HEK293 (cell line): ENCODE measurements at regions of chr14 and their contacts with region 1.

Region 1: DNA sequence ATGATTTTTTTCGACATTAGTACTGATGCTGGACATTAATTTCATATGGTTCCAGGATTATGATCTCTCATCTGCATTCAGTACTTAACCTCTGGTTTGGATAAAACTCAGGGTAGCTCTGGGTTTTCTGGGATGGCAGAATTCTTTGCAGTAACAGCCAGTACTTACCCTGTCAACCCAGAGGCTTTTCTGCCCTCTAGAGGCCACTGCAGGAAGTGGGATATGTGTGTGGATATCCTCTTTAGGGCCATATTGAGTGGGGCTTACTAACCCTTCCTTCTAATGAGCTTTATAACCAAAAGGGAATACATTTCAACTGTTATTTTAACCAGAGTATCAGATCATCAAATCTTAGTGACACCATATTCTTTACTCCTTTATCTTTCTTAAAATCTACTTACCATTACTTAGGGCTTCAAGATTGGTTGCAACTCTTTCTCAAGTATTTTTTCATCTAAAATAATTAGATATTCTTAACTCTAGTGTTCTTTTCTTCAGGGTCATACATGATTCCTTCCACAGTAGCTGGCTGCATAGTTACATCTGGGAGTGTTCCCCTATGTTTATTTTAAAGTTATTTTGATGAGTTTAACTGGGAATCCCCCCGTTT is 488.0 kb upstream of the STXBP6 start:
- H3K4me3 ChIP-seq: no peak overlapping the region
- H3K27ac ChIP-seq: no peak overlapping the region
- H3K4me1 ChIP-seq: no peaks in the 10 kb centered on the region
- CTCF ChIP-seq: no peak

Region 2: DNA sequence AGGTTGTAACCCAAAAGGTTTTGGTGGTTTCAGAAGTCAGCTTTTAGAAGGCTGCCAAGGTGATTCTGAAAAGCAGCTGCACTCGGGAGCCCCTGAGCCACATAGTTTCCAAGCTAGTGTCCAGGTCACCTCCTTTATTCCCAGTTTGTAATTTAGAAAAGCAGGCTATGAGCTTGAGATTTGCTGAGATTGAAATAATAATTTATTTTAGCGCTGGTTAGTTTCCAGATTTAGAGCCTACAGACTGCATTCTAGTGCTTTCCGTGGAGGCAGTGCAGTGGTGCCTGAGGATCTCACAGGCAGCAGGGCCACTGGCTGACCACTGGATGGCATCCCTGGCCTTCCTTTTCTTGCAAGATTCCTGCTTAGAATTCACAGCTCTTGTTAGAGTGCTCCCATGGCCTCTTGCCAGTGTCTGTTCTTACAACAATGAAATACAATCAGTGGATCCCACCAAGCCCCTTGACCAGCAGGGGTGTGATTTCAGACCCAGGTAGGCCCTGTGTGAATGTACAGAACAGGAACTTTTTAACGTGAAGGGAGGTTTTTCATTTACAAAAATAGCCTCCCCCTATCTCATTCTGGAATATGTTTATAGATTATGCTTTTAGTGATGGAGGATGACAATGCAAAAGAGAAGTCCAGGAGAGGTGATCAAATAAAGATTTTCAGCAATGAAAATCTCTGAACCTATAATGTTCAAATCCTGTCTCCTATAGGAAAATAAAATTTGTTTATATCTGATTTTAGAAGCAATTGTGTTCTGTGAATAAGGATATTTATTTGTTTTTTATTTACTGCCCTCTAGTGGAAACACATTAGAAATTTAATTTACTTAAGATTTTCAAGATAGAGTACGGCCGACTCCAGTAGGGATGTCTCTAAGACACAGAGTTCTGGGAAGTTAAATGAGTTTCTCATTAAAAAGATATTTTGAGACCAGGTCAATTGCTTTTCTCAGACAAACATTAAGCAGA is 125.9 kb before region 1 on chr14:
- CTCF ChIA-PET with region 1: interaction called, 11 read pairs
- POLR2A ChIA-PET with region 1: no interaction called
- H3K4me3 ChIP-seq: no peak overlapping the region
- H3K27ac ChIP-seq: no peak overlapping the region
- H3K4me1 ChIP-seq: no peaks in the 10 kb centered on the region
- CTCF ChIP-seq: no peak

Region 3: GRCh38 chr14:25431211-25432048 is 106.5 kb before region 1 on chr14:
- CTCF ChIA-PET with region 1: interaction called, 26 read pairs
- POLR2A ChIA-PET with region 1: no interaction called
- H3K4me3 ChIP-seq: no peak overlapping the region
- H3K27ac ChIP-seq: no peak overlapping the region
- H3K4me1 ChIP-seq: no peaks in the 10 kb centered on the region
- CTCF ChIP-seq: no peak

Region 4: DNA sequence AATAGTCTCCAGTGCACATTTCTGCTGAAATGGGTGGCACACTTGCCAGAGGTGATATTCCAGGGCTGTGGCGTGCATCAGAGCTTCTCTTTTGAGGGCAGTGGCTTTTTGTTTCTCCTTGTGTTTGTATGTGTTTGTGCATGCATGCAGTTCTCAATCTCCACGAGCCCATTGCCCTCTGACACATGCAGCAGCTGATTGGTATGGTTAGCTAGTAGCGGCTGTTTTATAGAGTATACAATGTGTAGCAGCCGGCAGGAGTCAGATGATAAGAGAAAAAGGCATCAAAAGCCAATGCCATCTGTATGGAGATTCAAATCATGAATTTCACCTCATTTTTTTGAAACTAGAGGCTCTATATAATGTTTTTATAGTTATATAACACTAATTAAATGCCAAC is 128.9 kb after region 1 on chr14:
- CTCF ChIA-PET with region 1: no interaction called
- POLR2A ChIA-PET with region 1: no interaction called
- H3K4me3 ChIP-seq: no peak overlapping the region
- H3K27ac ChIP-seq: no peak overlapping the region
- H3K4me1 ChIP-seq: no peaks in the 10 kb centered on the region
- CTCF ChIP-seq: no peak